Activated CD4-positive, alpha-beta memory T cell treated with anti-CD3 and anti-CD28 coated beads, Interleukin-2, amount 10 ng/mL, durations not matched to agents 7 days and 5 days (primary cell): ENCODE measurements at regions of chr2 and their contacts with region 1.

Region 1: DNA sequence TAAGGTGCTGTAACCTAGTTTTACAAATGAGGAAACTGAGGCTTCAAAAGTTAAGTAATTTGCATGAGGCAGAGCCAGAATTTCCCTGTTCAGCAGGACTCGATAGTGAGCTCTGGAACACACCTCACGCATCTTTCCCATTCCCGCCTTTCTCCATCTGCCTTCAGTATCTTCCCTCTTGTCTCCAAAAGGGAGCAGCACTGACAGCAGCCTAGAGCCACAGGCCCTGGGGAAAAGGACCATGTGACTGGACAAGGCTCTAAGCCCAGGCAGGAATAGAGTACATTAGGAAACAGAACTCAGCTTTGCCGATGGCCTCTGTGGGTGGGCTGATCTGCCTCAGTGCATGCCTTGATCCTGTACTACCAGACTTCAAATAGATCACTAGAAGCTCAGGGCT is 21.5 kb downstream of the GPR155 start:
- DNase-seq: no peak
- H3K4me3 Mint-ChIP-seq: no peak overlapping the region
- H3K27ac Mint-ChIP-seq: no peak overlapping the region
- H3K4me1 Mint-ChIP-seq: no peaks in the 10 kb centered on the region
- H3K27me3 Mint-ChIP-seq: no peaks in the 10 kb centered on the region

Region 2: DNA sequence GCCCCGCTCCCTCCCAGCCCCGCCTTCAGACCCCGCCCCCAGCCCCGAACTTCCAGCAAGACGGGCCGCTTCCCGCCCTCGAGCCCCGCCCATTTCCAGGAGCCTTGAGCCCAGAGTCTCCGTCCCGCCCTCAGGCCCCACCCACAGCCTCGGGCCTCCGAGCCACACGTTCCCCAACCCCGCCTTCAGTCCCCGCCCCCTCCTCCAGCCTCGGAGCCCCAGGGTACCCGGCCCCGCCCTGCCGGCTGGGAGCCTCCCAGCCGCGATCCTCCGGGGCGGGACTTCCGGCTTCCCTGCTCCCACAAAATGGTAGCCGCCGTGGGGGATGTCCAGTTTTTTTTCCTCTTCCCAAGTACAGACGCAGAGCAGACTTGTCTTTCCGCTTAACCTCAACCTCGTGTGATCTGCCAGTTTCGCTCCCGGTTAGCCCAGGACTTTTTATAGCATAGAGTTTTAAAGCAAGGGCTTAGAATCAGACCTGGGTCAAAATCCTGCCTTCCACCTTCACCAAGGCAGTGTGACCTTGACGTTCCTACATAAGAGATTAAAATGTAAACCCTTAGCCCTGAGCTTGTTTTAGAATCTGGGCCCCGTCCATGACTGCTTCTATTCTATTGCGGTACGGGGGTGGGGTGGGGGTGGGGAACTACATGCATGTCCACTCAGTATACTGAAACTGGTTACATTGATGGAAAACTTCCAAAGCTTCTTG is 21.9 kb after region 1 on chr2:
- CTCF ChIA-PET with region 1: interaction called, 35 read pairs
- POLR2A ChIA-PET with region 1: interaction called, 9 read pairs
- DNase-seq: peak; percentile 99
- H3K4me3 Mint-ChIP-seq: peak overlapping the region; percentile 85
- H3K27ac Mint-ChIP-seq: peak overlapping the region; percentile 57
- H3K4me1 Mint-ChIP-seq: peaks cover 64% of the 10 kb centered on the region
- H3K27me3 Mint-ChIP-seq: no peaks in the 10 kb centered on the region

Region 3: DNA sequence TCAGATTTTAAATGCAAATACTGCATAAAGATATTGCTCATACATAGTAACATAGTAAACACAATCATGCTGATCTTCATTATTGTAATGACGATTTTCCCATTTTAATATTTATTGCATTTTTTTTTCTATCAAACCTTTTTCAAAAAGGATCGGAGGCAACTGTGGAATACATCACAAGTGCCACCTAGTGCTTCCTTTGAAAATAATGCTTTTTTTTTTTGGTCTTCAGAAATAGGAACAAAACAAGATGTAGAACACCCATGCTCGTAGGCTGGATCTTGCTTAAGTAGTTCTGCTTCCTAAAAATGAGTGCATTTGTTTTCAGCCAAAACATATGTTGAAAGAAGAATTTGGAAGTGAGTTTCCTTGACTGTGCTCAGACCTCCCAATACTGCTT is 57.2 kb after region 1 on chr2:
- CTCF ChIA-PET with region 1: interaction called, 45 read pairs
- POLR2A ChIA-PET with region 1: interaction called, 6 read pairs
- DNase-seq: no peak
- H3K4me3 Mint-ChIP-seq: no peak overlapping the region
- H3K27ac Mint-ChIP-seq: no peak overlapping the region
- H3K4me1 Mint-ChIP-seq: peaks cover 9% of the 10 kb centered on the region
- H3K27me3 Mint-ChIP-seq: peaks cover 3% of the 10 kb centered on the region

Region 4: DNA sequence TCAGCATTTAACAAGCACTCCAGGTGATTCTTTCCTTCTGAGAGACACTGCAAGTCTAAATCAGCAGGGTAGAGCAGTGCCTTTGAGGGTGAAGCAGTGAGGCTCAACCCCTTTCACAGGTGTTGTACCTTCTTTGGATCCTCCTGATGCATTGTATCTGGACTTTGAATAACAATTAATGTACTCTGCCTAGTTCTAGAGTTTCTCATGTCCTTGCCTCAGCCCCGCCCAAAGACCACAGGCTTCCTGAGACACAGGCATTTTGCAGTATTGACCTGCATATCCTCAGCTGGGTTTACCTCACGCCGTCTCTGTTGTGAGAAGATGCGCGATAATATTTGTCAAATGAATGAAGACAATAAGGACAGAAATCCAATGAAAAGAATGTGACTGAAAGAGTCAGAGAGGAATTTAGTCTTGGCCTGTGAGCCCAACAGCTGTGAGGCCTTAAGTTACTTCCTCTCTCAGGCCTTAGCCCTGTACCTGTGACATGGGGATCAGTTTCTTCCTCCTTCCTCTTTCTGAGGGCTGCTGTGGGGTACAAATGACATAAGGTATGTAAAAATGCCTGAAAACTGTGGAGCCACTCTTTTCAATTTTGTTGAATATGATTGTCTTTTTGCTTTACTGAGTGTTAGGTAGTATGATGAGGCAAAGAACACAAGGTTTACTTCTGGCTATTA is 88.6 kb after region 1 on chr2:
- CTCF ChIA-PET with region 1: interaction called, 133 read pairs
- POLR2A ChIA-PET with region 1: no interaction called
- DNase-seq: peak; percentile 57
- H3K4me3 Mint-ChIP-seq: peak overlapping the region; percentile 25
- H3K27ac Mint-ChIP-seq: peak overlapping the region; percentile 77
- H3K4me1 Mint-ChIP-seq: peaks cover 43% of the 10 kb centered on the region
- H3K27me3 Mint-ChIP-seq: no peaks in the 10 kb centered on the region

Region 5: GRCh38 chr2:174577967-174578589 is 112.8 kb after region 1 on chr2:
- CTCF ChIA-PET with region 1: interaction called, 16 read pairs
- POLR2A ChIA-PET with region 1: no interaction called
- DNase-seq: peak; percentile 57
- H3K4me3 Mint-ChIP-seq: no peak overlapping the region
- H3K27ac Mint-ChIP-seq: no peak overlapping the region
- H3K4me1 Mint-ChIP-seq: peaks cover 78% of the 10 kb centered on the region
- H3K27me3 Mint-ChIP-seq: no peaks in the 10 kb centered on the region

Region 6: GRCh38 chr2:174688079-174688478 is 222.8 kb after region 1 on chr2:
- CTCF ChIA-PET with region 1: interaction called, 61 read pairs
- POLR2A ChIA-PET with region 1: interaction called, 8 read pairs
- DNase-seq: no peak
- H3K4me3 Mint-ChIP-seq: no peak overlapping the region
- H3K27ac Mint-ChIP-seq: no peak overlapping the region
- H3K4me1 Mint-ChIP-seq: peaks cover 36% of the 10 kb centered on the region
- H3K27me3 Mint-ChIP-seq: no peaks in the 10 kb centered on the region